ENCODE measurements at regions of chr14 and their contacts with region 1.

Region 1: GRCh38 chr14:96501742-96502617 is at the start of gene PAPOLA:
- DNase-seq: peak; percentile 90
- ATAC-seq: peak; percentile 93
- H3K4me3 ChIP-seq: peak within 1 kb of the TSS; percentile 86 to 90 (median 89)
- H3K27ac ChIP-seq: peak within 1 kb of the TSS; percentile 89
- H3K4me1 ChIP-seq: peaks cover 58% of the 10 kb centered on the region
- H3K27me3 ChIP-seq: no peaks in the 10 kb centered on the region; a peak in 1 of 5 replicates
- CTCF ChIP-seq: peak; percentile 49
- EP300 ChIP-seq: no peak
- POLR2A ChIP-seq: peak; percentile 89 to 94
- RAD21 ChIP-seq: peak; percentile 54; the same call in 1 of the 2 replicates
- total RNA-seq, gene PAPOLA: 103 and 179 TPM in 2 replicates

Region 2: GRCh38 chr14:96362965-96363756 is 138.8 kb before region 1 on chr14 and contains the starts of genes ATG2B and GSKIP:
- CTCF ChIA-PET with region 1: no interaction called
- POLR2A ChIA-PET with region 1: no interaction called
- in situ Hi-C with region 1: no loop called
- intact Hi-C with region 1: loop called (anchors 5 kb)
- DNase-seq: peak; percentile 78
- ATAC-seq: peak; percentile 84
- H3K4me3 ChIP-seq: peak within 1 kb of the TSS; percentile 91 to 98 (median 92)
- H3K27ac ChIP-seq: peak within 1 kb of the TSS; percentile 81
- H3K4me1 ChIP-seq: peaks cover 44% of the 10 kb centered on the region
- H3K27me3 ChIP-seq: no peaks in the 10 kb centered on the region; a peak in 1 of 5 replicates
- CTCF ChIP-seq: no peak
- EP300 ChIP-seq: no peak
- POLR2A ChIP-seq: peak; percentile 53 to 83
- RAD21 ChIP-seq: 0 out of 2 replicates have a peak, but pooled peaks have one; percentile 9
- total RNA-seq, gene ATG2B: 7.5 and 11.3 TPM in 2 replicates
- total RNA-seq, gene GSKIP: 27.3 and 52.3 TPM in 2 replicates

Region 3: GRCh38 chr14:96461950-96462683 is 39.9 kb before region 1 on chr14:
- CTCF ChIA-PET with region 1: no interaction called
- POLR2A ChIA-PET with region 1: interaction called, 3 read pairs
- in situ Hi-C with region 1: no loop called
- intact Hi-C with region 1: loop called (anchors 5 kb)
- DNase-seq: peak; percentile 90
- ATAC-seq: peak; percentile 88
- H3K4me3 ChIP-seq: peak overlapping the region in 2 of 3 experiments; percentile 15 to 44; a peak in 2 of 6 replicates
- H3K27ac ChIP-seq: peak overlapping the region; percentile 85
- H3K4me1 ChIP-seq: peaks cover 50% of the 10 kb centered on the region
- H3K27me3 ChIP-seq: no peaks in the 10 kb centered on the region
- CTCF ChIP-seq: no peak
- EP300 ChIP-seq: peak; percentile 68 to 88; a peak in 3 of 4 replicates
- POLR2A ChIP-seq: peak; percentile 38; a peak in 1 of 4 replicates
- RAD21 ChIP-seq: no peak